GM12878 (cell line): ENCODE measurements at regions of chr4 and their contacts with region 1.

Region 1: DNA sequence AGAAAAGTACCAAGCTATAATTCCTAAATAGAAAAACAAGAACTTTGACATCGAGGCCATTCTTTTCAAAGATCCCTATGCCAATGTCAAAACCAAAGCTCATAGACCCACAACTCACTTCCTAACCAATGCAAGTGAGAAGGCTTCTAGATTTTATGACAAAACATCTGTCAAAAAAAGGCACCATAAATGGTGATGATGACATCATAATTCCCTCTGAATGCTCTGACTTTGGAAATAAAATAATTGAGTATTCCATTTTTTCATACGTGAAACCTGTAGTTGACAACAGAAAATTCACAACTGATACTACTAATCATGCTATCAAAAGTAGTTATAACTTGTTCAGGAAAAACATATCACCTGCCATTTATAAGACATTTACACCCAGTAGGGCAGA is 8.7 kb upstream of the CABS1 start:
- DNase-seq: no peak
- ATAC-seq: no peak
- H3K4me3 ChIP-seq: no peak overlapping the region
- H3K27ac ChIP-seq: no peak overlapping the region
- H3K4me1 ChIP-seq: no peaks in the 10 kb centered on the region
- H3K27me3 ChIP-seq: no peaks in the 10 kb centered on the region
- CTCF ChIP-seq: no peak
- EP300 ChIP-seq: no peak
- POLR2A ChIP-seq: no peak
- RAD21 ChIP-seq: no peak

Region 2: GRCh38 chr4:70269674-70270073 is 56.4 kb before region 1 on chr4:
- CTCF ChIA-PET with region 1: no interaction called
- POLR2A ChIA-PET with region 1: no interaction called
- RAD21 ChIA-PET with region 1: no interaction called
- SMC1A ChIA-PET with region 1: no interaction called
- in situ Hi-C with region 1: no loop called
- intact Hi-C with region 1: no loop called
- DNase-seq: no peak
- ATAC-seq: no peak
- H3K4me3 ChIP-seq: no peak overlapping the region
- H3K27ac ChIP-seq: no peak overlapping the region
- H3K4me1 ChIP-seq: no peaks in the 10 kb centered on the region
- H3K27me3 ChIP-seq: no peaks in the 10 kb centered on the region
- CTCF ChIP-seq: peak in 1 of 3 experiments; percentile 19; a peak in 1 of 6 replicates
- EP300 ChIP-seq: no peak
- POLR2A ChIP-seq: no peak
- RAD21 ChIP-seq: peak; percentile 19; the same call in 1 of the 2 replicates

Region 3: DNA sequence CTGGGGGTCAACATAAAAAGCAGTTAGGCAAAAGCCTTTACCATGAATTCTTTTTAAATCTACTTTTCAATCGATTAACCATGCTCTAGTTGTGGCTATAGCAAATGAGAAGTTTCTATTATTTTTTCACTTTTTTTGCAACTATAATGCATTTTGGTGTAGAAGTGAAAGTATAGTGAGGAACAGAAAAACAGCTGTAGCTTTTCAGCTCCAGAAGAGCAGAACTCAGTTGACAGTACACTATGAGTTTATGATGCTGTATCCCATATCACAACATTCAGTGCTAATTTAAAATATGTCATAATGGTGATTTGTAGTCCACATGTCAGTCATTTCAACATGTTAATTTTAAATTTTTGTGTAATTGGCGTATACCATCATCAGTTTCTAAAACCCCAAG is 137.3 kb after region 1 on chr4:
- CTCF ChIA-PET with region 1: no interaction called
- POLR2A ChIA-PET with region 1: no interaction called
- RAD21 ChIA-PET with region 1: no interaction called
- SMC1A ChIA-PET with region 1: no interaction called
- in situ Hi-C with region 1: no loop called
- intact Hi-C with region 1: no loop called
- DNase-seq: no peak
- ATAC-seq: peak; percentile 65
- H3K4me3 ChIP-seq: no peak overlapping the region
- H3K27ac ChIP-seq: no peak overlapping the region
- H3K4me1 ChIP-seq: no peaks in the 10 kb centered on the region
- H3K27me3 ChIP-seq: no peaks in the 10 kb centered on the region
- CTCF ChIP-seq: no peak
- EP300 ChIP-seq: no peak
- POLR2A ChIP-seq: no peak
- RAD21 ChIP-seq: no peak

Region 4: DNA sequence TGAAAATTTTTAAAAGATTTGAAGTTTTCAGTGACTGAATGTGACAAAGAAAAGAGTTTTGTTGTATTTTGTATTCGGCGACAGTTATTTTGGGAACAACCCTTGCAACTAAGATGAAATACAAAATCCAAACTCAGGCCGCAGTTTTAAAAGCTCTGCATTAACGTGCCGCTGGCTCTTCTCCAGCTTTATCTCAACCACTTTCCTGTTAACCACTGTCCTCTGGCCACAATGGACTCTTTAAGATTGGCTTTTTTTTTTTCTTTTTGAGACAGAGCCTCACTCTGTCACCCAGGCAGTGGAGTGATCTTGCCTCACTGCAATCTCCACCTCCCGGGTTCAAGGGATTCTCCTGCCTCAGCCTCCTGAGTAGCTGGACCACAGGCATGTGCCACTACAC is 170.2 kb after region 1 on chr4:
- CTCF ChIA-PET with region 1: no interaction called
- POLR2A ChIA-PET with region 1: no interaction called
- RAD21 ChIA-PET with region 1: no interaction called
- SMC1A ChIA-PET with region 1: no interaction called
- in situ Hi-C with region 1: loop called (anchors 10 kb)
- intact Hi-C with region 1: no loop called
- DNase-seq: no peak
- ATAC-seq: no peak
- H3K4me3 ChIP-seq: no peak overlapping the region
- H3K27ac ChIP-seq: no peak overlapping the region
- H3K4me1 ChIP-seq: no peaks in the 10 kb centered on the region
- H3K27me3 ChIP-seq: no peaks in the 10 kb centered on the region
- CTCF ChIP-seq: no peak
- EP300 ChIP-seq: no peak
- POLR2A ChIP-seq: no peak
- RAD21 ChIP-seq: no peak